GM12878 (cell line): ENCODE measurements at regions of chr3 and their contacts with region 1.

Region 1: DNA sequence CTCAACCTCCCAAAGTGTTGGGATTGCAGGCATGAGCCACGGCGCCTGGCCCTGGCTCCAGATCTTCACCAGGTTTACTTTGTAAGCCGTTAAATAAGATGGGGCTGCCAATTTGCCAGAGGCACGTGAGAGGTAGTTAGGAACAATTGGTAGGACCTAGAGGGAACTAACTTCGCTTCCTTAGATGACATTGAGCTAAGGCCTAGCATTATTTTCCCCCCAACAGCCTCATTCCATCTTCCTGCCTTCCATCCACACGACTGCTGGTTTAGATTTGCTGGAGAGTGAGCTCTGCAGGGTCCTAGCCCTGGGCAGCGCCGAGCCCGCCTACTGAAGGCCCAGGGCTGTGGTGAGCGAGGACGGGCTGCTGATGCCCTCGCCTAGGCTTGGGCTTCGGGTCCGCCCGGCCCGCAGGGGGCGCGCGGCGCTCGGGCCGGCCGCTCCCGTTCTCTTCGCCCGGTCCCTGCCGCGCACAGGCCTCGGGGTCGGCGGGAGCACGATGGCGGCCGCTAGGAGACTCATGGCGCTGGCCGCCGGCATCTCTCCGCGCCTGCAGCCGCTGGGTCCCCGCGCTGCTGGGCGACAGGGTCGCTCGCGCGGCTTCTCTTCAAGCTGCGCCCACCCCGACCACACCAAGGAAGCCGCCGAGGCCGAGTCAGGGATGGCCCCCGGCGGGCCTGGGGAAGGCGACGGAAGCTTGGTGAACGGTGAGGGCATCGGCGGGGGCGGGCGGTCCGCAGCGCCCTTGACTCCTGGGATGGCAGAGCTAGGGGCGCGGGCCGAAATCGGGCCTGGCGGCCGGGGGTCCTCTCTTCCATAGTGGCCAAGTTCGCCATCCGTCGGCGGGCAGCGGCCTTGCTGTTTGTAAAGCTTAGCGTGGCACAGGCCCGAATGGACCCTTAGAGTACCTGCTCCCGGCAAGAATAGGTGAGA is 21.9 kb downstream of the DHX30 start:
- DNase-seq: peak; percentile 25
- ATAC-seq: peak; percentile 100
- H3K4me3 ChIP-seq: peak overlapping the region; percentile 98
- H3K27ac ChIP-seq: peak overlapping the region; percentile 85
- H3K4me1 ChIP-seq: peaks cover 6% of the 10 kb centered on the region
- H3K27me3 ChIP-seq: no peaks in the 10 kb centered on the region
- CTCF ChIP-seq: peak; percentile 70 to 92 (median 86); a peak in 5 of 6 replicates
- EP300 ChIP-seq: no peak
- POLR2A ChIP-seq: peak; percentile 95
- RAD21 ChIP-seq: peak; percentile 38; the same call in 1 of the 2 replicates

Region 2: GRCh38 chr3:47731061-47731460 is 93.7 kb before region 1 on chr3:
- CTCF ChIA-PET with region 1: no interaction called
- POLR2A ChIA-PET with region 1: no interaction called
- RAD21 ChIA-PET with region 1: no interaction called
- SMC1A ChIA-PET with region 1: no interaction called
- in situ Hi-C with region 1: no loop called
- intact Hi-C with region 1: no loop called
- DNase-seq: no peak
- ATAC-seq: no peak
- H3K4me3 ChIP-seq: no peak overlapping the region
- H3K27ac ChIP-seq: no peak overlapping the region
- H3K4me1 ChIP-seq: peaks cover 16% of the 10 kb centered on the region
- H3K27me3 ChIP-seq: no peaks in the 10 kb centered on the region
- CTCF ChIP-seq: no peak
- EP300 ChIP-seq: no peak
- POLR2A ChIP-seq: no peak
- RAD21 ChIP-seq: no peak

Region 3: GRCh38 chr3:47802734-47803477 is 21.9 kb before region 1 on chr3 and contains the start of gene DHX30:
- CTCF ChIA-PET with region 1: interaction called, 15 read pairs
- POLR2A ChIA-PET with region 1: interaction called, 3 read pairs
- RAD21 ChIA-PET with region 1: interaction called, 3 read pairs
- SMC1A ChIA-PET with region 1: interaction called, 6 read pairs
- in situ Hi-C with region 1: no loop called
- intact Hi-C with region 1: no loop called
- DNase-seq: no peak
- ATAC-seq: peak; percentile 97
- H3K4me3 ChIP-seq: peak within 1 kb of the TSS; percentile 92
- H3K27ac ChIP-seq: peak within 1 kb of the TSS; percentile 74
- H3K4me1 ChIP-seq: peaks cover 11% of the 10 kb centered on the region
- H3K27me3 ChIP-seq: no peaks in the 10 kb centered on the region
- CTCF ChIP-seq: no peak
- EP300 ChIP-seq: no peak
- POLR2A ChIP-seq: peak; percentile 78
- RAD21 ChIP-seq: no peak
- polyA plus RNA-seq, gene DHX30: 9.5 to 12.6 TPM

Region 4: GRCh38 chr3:47813551-47814177 is 11.1 kb before region 1 on chr3:
- CTCF ChIA-PET with region 1: interaction called, 42 read pairs
- POLR2A ChIA-PET with region 1: interaction called, 5 read pairs
- RAD21 ChIA-PET with region 1: interaction called, 6 read pairs
- SMC1A ChIA-PET with region 1: interaction called, 7 read pairs
- in situ Hi-C with region 1: no loop called
- intact Hi-C with region 1: no loop called
- DNase-seq: no peak
- ATAC-seq: peak; percentile 50; the same call in 2 of the 3 replicates
- H3K4me3 ChIP-seq: no peak overlapping the region
- H3K27ac ChIP-seq: no peak overlapping the region
- H3K4me1 ChIP-seq: no peaks in the 10 kb centered on the region
- H3K27me3 ChIP-seq: no peaks in the 10 kb centered on the region
- CTCF ChIP-seq: no peak
- EP300 ChIP-seq: no peak
- POLR2A ChIP-seq: no peak
- RAD21 ChIP-seq: no peak

Region 5: GRCh38 chr3:47836986-47837385 is 12.2 kb after region 1 on chr3:
- CTCF ChIA-PET with region 1: interaction called, 44 read pairs
- POLR2A ChIA-PET with region 1: no interaction called
- RAD21 ChIA-PET with region 1: interaction called, 3 read pairs
- SMC1A ChIA-PET with region 1: interaction called, 3 read pairs
- in situ Hi-C with region 1: no loop called
- intact Hi-C with region 1: no loop called
- DNase-seq: no peak
- ATAC-seq: no peak
- H3K4me3 ChIP-seq: no peak overlapping the region
- H3K27ac ChIP-seq: no peak overlapping the region
- H3K4me1 ChIP-seq: no peaks in the 10 kb centered on the region
- H3K27me3 ChIP-seq: no peaks in the 10 kb centered on the region
- CTCF ChIP-seq: no peak
- EP300 ChIP-seq: no peak
- POLR2A ChIP-seq: no peak; the same call in 1 of the 2 replicates
- RAD21 ChIP-seq: no peak

Region 6: DNA sequence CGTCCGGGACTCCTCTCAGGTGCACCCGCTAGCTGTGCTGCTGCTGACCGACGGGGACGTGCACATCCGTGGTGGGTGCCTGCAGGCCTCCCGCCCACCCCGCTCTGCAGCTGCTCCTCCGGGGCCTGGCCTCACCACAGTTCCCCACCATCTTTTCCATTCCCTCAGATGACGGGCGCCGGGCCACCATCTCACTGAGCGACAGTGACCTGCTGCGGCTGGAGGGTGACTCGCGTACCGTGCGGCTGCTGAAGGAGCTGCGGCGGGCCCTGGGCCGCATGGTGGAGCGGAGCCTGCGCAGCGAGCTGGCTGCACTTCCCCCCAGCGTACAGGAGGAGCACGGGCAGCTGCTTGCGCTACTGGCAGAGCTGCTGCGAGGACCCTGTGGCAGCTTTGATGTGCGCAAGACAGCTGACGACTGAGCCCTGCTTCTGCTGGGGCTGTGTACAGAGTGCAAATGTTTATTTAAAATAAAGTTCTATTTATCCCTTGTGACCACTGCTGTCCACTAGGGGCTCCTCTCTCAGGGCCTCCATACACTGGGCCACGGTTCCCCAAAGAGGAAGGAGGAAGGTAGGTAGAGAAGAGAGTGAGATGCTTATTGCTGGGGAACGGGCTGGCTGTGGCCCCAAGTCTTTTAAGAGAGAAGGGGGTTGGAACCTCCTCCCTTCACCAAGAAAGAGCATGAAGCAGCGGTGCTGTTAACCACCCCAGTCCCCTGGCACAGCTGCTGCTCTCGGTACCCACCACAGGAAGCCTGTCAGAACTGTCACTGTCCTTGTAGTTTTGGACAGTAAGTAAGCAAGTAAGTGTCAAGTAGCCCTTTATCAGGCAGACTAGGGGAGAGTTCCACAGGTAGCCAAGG is 25.1 kb after region 1 on chr3:
- CTCF ChIA-PET with region 1: no interaction called
- POLR2A ChIA-PET with region 1: no interaction called
- RAD21 ChIA-PET with region 1: no interaction called
- SMC1A ChIA-PET with region 1: no interaction called
- in situ Hi-C with region 1: no loop called
- intact Hi-C with region 1: no loop called
- DNase-seq: no peak
- ATAC-seq: peak; percentile 75
- H3K4me3 ChIP-seq: no peak overlapping the region
- H3K27ac ChIP-seq: no peak overlapping the region
- H3K4me1 ChIP-seq: no peaks in the 10 kb centered on the region
- H3K27me3 ChIP-seq: no peaks in the 10 kb centered on the region
- CTCF ChIP-seq: peak; percentile 18 to 31 (median 31); a peak in 3 of 6 replicates
- EP300 ChIP-seq: no peak
- POLR2A ChIP-seq: peak; percentile 66
- RAD21 ChIP-seq: peak; percentile 34; the same call in 1 of the 2 replicates